Endothelial cell of umbilical vein (primary cell): ENCODE measurements at regions of chr17 and their contacts with region 1.

Region 1: GRCh38 chr17:32444308-32445073 is at the start of gene PSMD11:
- DNase-seq: peak; percentile 97
- H3K4me3 ChIP-seq: peak within 1 kb of the TSS; percentile 53 to 80 (median 57)
- H3K27ac ChIP-seq: peak within 1 kb of the TSS; percentile 59
- H3K4me1 ChIP-seq: peaks cover 18% of the 10 kb centered on the region
- H3K27me3 ChIP-seq: peaks cover 10 to 11% of the 10 kb centered on the region in 2 experiments
- CTCF ChIP-seq: peak; percentile 97 to 98
- POLR2A ChIP-seq: peak; percentile 42
- total RNA-seq, gene PSMD11: 153 and 161 TPM in 2 replicates

Region 2: DNA sequence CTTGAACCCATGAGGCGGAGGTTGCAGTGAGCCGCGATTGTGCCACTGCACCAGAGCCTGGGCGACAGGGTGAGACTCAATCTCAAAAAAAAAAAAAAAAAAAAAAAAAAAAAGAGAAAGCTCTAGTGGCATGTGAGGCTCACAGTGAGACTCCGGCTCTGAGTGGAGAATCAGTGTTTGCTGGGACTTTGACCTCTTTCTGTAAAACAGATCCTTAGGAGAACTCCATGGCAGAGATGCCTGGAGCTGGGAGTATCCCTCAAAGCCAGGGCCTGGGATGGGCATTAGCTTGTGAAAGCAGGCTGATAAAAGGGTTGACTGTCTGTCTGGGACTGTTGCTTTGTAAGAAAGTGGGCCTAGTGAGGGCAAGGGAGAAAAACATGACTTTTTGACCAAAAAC is 48.1 kb before region 1 on chr17:
- CTCF ChIA-PET with region 1: interaction called, 10 read pairs
- POLR2A ChIA-PET with region 1: no interaction called
- dilution Hi-C with region 1: no loop called
- intact Hi-C with region 1: no loop called
- DNase-seq: no peak
- H3K4me3 ChIP-seq: no peak overlapping the region
- H3K27ac ChIP-seq: no peak overlapping the region
- H3K4me1 ChIP-seq: no peaks in the 10 kb centered on the region
- H3K27me3 ChIP-seq: no peaks in the 10 kb centered on the region
- CTCF ChIP-seq: no peak
- POLR2A ChIP-seq: no peak

Region 3: DNA sequence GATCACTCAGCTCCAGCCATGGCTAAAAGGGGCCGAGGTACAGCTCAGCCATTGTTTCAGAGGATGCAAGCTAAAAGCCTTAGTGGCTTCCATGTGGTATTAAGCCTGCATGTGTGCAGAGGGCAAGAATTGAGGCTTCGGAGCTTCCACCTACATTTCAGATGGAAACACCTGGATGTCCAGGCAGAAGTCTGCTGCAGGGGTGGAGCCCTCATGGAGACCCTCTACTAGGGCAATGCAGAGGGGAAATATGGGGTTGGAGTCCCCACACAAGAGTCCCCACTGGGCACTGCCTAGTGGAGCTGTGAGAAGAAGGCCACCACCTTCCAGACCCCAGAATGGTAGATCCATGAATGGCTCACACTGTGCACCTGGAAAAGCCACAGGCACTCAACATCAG is 14.9 kb before region 1 on chr17:
- CTCF ChIA-PET with region 1: interaction called, 15 read pairs
- POLR2A ChIA-PET with region 1: no interaction called
- dilution Hi-C with region 1: no loop called
- intact Hi-C with region 1: no loop called
- DNase-seq: no peak
- H3K4me3 ChIP-seq: no peak overlapping the region
- H3K27ac ChIP-seq: no peak overlapping the region
- H3K4me1 ChIP-seq: no peaks in the 10 kb centered on the region
- H3K27me3 ChIP-seq: no peaks in the 10 kb centered on the region
- CTCF ChIP-seq: no peak
- POLR2A ChIP-seq: no peak

Region 4: GRCh38 chr17:32461853-32462617 is 17.5 kb after region 1 on chr17:
- CTCF ChIA-PET with region 1: interaction called, 28 read pairs
- POLR2A ChIA-PET with region 1: no interaction called
- dilution Hi-C with region 1: no loop called
- intact Hi-C with region 1: no loop called
- DNase-seq: peak; percentile 69
- H3K4me3 ChIP-seq: no peak overlapping the region
- H3K27ac ChIP-seq: no peak overlapping the region
- H3K4me1 ChIP-seq: no peaks in the 10 kb centered on the region
- H3K27me3 ChIP-seq: no peaks in the 10 kb centered on the region
- CTCF ChIP-seq: peak; percentile 59 to 67
- POLR2A ChIP-seq: no peak